Endothelial cell of umbilical vein (primary cell): ENCODE measurements at regions of chr3 and their contacts with region 1.

Region 1: GRCh38 chr3:58188173-58188564 is 22.6 kb downstream of the DNASE1L3 start:
- DNase-seq: no peak
- H3K4me3 ChIP-seq: no peak overlapping the region
- H3K27ac ChIP-seq: no peak overlapping the region
- H3K4me1 ChIP-seq: no peaks in the 10 kb centered on the region
- H3K27me3 ChIP-seq: no peaks in the 10 kb centered on the region
- CTCF ChIP-seq: no peak
- POLR2A ChIP-seq: no peak

Region 2: GRCh38 chr3:58177747-58178527 is 10.2 kb before region 1 on chr3:
- CTCF ChIA-PET with region 1: interaction called, 80 read pairs
- POLR2A ChIA-PET with region 1: no interaction called
- dilution Hi-C with region 1: no loop called
- intact Hi-C with region 1: no loop called
- DNase-seq: peak; percentile 79
- H3K4me3 ChIP-seq: peak overlapping the region in 2 of 3 experiments; percentile 8 to 22
- H3K27ac ChIP-seq: no peak overlapping the region
- H3K4me1 ChIP-seq: peaks cover 34% of the 10 kb centered on the region
- H3K27me3 ChIP-seq: no peaks in the 10 kb centered on the region
- CTCF ChIP-seq: peak; percentile 89 to 97
- POLR2A ChIP-seq: peak; percentile 36

Region 3: DNA sequence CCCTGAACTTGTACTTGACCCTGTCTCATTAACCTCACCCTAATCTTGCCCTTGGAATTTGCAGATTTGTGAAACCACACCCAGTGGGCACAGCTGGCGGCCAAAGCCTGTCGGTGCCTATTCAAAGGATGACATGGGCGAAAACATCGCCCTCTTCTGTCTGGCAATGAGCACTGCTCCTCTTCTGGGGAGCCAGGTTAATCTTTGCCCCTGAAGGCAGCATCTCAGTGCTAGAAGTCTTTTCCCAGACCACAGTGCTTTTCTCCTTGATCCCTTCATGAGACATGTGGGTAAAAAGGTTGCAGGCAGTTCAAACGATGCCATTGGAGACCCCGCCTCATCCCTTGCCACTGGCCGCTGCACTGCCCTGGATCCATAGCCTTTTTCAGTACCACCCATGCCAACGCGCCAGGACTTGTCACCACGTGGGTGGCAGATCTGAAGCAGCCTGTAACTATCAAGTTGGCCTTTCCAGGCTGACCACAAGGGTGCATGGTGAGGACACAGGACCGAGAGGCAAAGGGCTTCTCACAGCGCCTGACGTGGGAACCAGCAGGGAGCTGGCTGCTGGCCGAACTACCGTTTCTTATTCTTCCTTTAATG is 29.1 kb after region 1 on chr3:
- CTCF ChIA-PET with region 1: interaction called, 294 read pairs
- POLR2A ChIA-PET with region 1: interaction called, 4 read pairs
- dilution Hi-C with region 1: no loop called
- intact Hi-C with region 1: loop called (anchors 1 kb)
- DNase-seq: peak; percentile 77
- H3K4me3 ChIP-seq: no peak overlapping the region
- H3K27ac ChIP-seq: no peak overlapping the region
- H3K4me1 ChIP-seq: no peaks in the 10 kb centered on the region
- H3K27me3 ChIP-seq: no peaks in the 10 kb centered on the region
- CTCF ChIP-seq: peak; percentile 81 to 86
- POLR2A ChIP-seq: no peak

Region 4: DNA sequence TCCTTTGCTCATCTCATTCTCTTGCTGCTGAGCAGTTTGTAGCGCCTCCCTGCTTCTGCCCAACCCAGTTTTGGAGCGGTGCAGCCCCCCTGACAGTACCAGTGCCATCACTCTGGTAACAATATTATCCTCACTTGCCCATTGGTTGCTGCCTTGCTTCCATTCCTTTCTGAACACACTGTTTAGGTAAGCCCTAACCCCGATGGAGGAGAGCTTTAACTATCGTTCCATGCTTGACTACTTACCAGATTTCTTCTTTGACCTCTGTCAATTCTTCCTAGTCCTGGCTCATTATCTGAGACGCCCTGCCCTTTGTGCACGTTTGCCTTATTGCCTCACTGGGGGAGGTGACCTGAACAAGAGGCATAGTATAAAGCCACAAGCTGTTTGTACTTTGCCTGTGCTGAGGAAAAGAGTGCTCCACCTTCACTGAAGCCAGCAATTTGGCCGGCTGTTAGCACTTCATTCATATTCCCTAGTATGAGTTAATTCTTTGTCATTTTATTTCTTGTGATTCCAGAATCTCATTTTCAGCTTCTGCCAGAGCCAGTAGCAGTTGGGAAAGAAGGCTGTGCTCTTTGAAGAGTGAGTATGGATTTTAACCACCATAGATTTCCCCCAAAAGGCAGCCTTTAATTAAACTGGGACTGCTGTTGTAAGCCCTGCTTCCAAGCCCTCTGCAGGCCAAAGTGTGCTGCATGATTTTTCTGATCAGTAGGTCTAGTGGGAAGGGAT is 61.4 kb after region 1 on chr3:
- CTCF ChIA-PET with region 1: interaction called, 11 read pairs
- POLR2A ChIA-PET with region 1: no interaction called
- dilution Hi-C with region 1: no loop called
- intact Hi-C with region 1: no loop called
- DNase-seq: peak; percentile 18
- H3K4me3 ChIP-seq: no peak overlapping the region
- H3K27ac ChIP-seq: no peak overlapping the region
- H3K4me1 ChIP-seq: no peaks in the 10 kb centered on the region
- H3K27me3 ChIP-seq: no peaks in the 10 kb centered on the region
- CTCF ChIP-seq: peak in 1 of 2 donors; percentile 4
- POLR2A ChIP-seq: no peak

Region 5: DNA sequence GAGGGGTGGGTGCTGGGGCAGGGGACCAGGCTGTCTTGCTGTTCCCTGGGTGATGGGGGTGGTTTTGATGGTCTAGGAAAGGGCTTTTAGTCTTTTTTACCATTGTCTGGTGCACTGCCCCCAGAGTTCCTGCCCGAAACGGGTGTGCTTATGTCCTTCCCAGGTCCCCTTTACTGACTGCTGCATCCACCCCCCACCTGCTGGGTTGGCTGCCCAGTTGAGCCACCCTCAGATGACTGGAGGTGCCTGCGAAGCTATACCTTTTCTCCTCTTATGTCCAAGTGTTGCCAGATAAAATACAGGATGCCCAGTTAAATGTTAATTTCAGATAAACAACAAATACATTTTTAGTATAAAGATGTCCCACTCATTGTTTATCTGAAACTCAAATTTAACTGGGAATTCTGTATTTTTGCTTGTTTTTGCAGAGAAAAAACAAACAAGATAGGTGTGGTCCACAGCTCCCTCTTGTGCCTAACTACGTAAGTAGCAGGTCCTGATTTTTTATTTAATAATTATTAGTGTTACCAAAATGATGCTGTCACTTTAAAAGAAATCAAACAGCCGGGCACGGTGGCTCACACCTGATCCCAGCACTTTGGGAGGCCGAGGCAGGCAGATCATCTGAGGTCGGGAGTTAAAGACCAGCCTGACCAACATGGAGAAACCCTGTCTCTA is 111.8 kb after region 1 on chr3:
- CTCF ChIA-PET with region 1: interaction called, 369 read pairs
- POLR2A ChIA-PET with region 1: interaction called, 5 read pairs
- dilution Hi-C with region 1: loop called (anchors 10 kb)
- intact Hi-C with region 1: loop called (anchors 1 kb)
- DNase-seq: peak; percentile 70
- H3K4me3 ChIP-seq: no peak overlapping the region
- H3K27ac ChIP-seq: no peak overlapping the region
- H3K4me1 ChIP-seq: no peaks in the 10 kb centered on the region
- H3K27me3 ChIP-seq: peaks cover 17 to 18% of the 10 kb centered on the region in 2 experiments
- CTCF ChIP-seq: peak; percentile 33 to 37
- POLR2A ChIP-seq: no peak

Region 6: DNA sequence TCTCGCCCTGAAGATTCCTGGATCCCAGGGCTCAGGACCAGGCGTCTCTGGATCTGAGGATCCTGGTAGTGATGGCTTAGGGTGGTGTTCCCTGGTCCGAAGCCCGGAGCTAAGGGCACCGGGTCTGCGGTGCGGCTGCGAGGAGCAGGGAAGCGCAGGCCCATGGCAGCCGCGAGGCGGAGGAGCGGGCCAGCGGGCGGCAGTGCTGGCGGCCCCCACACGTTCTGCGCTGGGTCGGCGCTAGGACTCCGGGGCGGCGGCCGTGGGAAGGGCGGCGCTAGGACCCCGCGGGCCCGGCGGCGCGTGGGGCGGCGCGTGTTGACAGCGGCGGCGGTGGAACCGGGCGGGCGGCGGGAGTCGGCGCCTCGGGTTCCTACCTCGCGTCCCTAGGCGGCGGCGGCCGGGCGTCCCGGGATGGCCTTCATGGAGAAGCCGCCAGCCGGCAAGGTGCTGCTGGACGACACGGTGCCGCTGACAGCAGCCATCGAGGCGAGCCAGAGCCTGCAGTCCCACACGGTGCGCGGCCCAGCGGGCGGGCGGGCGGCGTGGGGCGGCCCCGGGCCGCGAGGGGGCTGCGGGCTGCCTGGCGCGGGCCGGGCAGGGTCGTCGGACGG is 144.5 kb after region 1 on chr3 and contains the start of gene PXK:
- CTCF ChIA-PET with region 1: no interaction called
- POLR2A ChIA-PET with region 1: no interaction called
- dilution Hi-C with region 1: no loop called
- intact Hi-C with region 1: no loop called
- DNase-seq: peak; percentile 75
- H3K4me3 ChIP-seq: peak within 1 kb of the TSS; percentile 63 to 71 (median 63)
- H3K27ac ChIP-seq: peak within 1 kb of the TSS; percentile 41
- H3K4me1 ChIP-seq: peaks cover 12% of the 10 kb centered on the region
- H3K27me3 ChIP-seq: no peaks in the 10 kb centered on the region
- CTCF ChIP-seq: peak in 1 of 2 donors; percentile 32
- POLR2A ChIP-seq: no peak
- total RNA-seq, gene PXK: 11.1 and 14.6 TPM in 2 replicates

Region 7: GRCh38 chr3:58630076-58630709 is 442.0 kb after region 1 on chr3:
- CTCF ChIA-PET with region 1: no interaction called
- POLR2A ChIA-PET with region 1: no interaction called
- dilution Hi-C with region 1: no loop called
- intact Hi-C with region 1: loop called (anchors 5 kb)
- DNase-seq: peak; percentile 62
- H3K4me3 ChIP-seq: no peak overlapping the region
- H3K27ac ChIP-seq: peak overlapping the region; percentile 74
- H3K4me1 ChIP-seq: peaks cover 32% of the 10 kb centered on the region
- H3K27me3 ChIP-seq: no peaks in the 10 kb centered on the region
- CTCF ChIP-seq: peak; percentile 88 to 89
- POLR2A ChIP-seq: no peak